BJ (cell line): ENCODE measurements at regions of chr1 and their contacts with region 1.

Region 1: DNA sequence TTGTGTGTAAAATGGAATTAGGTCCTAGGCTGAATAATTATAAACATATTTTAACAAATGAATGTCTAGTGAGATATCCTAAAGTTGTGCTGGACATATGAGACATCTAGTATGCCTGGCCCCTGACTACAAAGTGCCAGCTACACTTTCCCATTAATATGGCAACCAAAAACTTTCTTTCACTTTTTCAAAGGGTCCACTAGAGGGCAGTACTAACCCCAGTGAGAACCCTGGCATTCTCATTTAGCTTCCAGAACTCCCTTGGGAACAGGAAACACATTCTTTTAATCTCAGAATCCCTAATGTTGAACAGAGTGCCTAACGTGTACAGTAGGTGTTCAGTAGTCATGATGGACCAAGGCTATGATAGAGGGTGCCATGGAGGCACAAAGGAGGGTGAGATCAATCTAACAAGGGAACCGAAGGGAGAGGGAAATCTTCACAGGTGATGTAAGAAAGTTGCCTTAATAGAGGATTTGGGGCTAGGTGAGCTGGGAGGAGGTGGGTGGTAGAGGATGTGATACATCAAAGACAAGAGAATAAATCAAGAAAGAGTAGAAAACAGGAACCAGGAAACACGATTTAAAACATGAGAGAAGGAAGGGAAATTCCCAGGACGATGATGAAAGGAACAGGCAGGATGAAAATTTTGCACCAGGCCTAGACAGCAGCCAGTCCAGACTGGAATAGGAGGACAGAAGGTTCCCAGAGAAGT is 41.6 kb downstream of the NSL1 start:
- DNase-seq: no peak
- H3K4me3 ChIP-seq: no peak overlapping the region
- H3K27me3 ChIP-seq: no peaks in the 10 kb centered on the region
- CTCF ChIP-seq: peak; percentile 79

Region 2: DNA sequence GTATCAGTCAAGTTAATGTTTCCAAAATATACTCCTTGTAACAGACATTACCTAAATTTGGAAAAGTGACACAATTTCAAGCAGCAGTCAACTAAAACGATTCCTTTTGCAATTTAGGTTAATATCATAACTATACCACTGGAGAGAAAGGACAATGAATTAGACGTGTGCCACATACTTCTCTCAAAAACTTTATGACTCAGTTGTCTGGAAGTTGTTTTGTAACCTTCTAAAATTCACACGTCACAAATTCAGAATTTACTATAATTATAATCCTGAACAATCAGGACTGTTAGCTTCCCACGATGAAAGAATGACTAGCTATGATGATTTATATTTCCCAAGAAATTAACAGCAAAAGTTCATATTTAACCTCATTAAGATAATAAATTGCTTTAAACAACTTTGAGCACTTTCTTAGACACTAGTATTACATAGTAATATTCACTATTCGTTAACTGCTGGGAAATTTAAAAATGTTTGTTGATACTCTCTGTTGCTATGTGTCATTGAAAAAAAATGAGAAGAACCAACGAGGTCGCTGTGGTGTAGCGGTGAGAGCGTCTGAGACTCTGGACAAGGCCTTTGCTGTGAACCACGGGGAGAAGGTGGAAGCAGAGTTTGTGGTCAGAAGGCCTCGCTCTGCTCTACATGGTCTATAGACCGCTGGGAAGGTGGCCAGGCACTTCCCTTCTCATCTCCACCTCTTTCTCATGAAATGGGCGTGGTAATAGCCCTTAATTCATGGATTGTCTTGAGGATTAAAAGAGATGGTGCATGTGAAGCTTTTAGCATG is 22.4 kb before region 1 on chr1:
- CTCF ChIA-PET with region 1: interaction called, 9 read pairs
- POLR2A ChIA-PET with region 1: interaction called, 14 read pairs
- DNase-seq: no peak
- H3K4me3 ChIP-seq: no peak overlapping the region
- H3K27me3 ChIP-seq: no peaks in the 10 kb centered on the region
- CTCF ChIP-seq: no peak

Region 3: DNA sequence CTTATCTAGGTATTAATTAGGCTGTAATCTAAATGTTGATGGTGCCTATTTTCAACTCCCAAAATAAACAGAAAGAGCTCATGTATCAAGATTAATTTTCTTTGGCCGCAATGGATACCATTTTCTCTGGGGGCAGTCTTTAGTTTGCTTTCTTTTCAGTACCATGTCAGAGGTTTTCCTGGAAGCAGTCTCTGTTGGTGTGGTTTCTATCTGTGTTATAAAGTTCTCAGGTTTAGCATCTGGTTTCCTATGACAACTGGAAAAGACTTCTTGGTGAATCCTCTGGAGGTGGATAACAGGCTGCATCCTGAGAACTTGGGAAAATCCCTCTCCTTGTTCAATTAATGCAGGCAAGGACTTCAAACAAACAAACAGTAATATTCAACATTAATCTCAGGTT is 11.6 kb before region 1 on chr1:
- CTCF ChIA-PET with region 1: interaction called, 23 read pairs
- POLR2A ChIA-PET with region 1: no interaction called
- DNase-seq: no peak
- H3K4me3 ChIP-seq: no peak overlapping the region
- H3K27me3 ChIP-seq: no peaks in the 10 kb centered on the region
- CTCF ChIP-seq: no peak

Region 4: DNA sequence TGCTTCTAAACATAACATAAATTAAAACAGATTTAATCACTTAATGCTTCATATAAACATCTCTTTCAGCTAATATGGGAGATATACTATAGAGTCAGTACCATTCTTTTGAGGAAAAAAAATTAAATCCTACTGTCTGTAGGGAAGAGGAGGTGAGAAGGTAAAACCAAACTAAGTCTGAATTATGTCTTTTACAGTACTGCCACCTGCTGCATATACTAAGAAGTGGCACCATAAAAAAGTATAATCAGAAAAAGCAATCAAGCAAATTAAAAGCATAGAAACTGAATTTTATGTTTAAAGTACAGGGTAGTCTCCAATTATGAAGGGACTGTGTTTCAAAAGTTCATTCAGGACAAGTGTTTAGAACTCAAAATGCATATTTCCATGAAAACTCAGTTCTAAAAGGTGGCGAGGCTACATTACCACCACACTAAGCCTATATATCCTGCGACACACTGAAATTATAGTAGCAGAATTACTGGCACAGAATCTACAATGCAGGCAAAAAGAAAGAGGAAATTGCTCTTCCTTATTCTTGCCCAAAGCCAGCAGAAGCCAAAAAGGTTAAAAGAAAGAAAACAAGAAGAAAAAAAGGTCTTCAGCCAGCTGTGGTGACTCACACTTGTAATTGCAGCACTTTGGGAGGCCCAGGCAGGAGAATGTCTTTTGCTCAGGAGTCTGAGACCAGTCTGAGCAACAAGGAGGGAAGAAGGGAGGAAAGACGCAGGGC is 32.6 kb after region 1 on chr1:
- CTCF ChIA-PET with region 1: interaction called, 13 read pairs
- POLR2A ChIA-PET with region 1: no interaction called
- DNase-seq: no peak
- H3K4me3 ChIP-seq: no peak overlapping the region
- H3K27me3 ChIP-seq: no peaks in the 10 kb centered on the region
- CTCF ChIP-seq: peak; percentile 59

Region 5: DNA sequence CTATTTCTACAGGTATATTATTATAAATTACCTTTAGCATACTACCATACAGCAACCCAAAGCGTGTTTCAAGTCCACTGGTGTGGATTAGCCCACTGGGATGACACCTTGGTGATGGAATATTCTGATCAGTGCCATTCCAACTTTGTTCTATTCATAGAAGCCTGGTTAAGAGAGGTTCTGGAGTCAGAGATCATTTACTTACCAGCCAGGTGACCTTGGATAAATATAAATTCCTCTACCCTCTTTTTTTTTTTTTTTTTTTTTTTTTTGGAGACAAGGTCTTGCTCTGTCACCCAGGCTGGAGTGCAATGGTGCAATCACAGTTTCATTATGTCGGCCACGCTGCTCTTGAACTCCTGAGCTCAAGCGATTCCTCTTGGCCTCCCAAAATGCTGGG is 97.6 kb after region 1 on chr1 and contains the start of gene SPATA45:
- CTCF ChIA-PET with region 1: no interaction called
- POLR2A ChIA-PET with region 1: no interaction called
- DNase-seq: no peak
- H3K4me3 ChIP-seq: no peak within 1 kb of the TSS
- H3K27me3 ChIP-seq: no peaks in the 10 kb centered on the region
- CTCF ChIP-seq: no peak
- polyA plus RNA-seq, gene SPATA45: not detected in 2 replicates